ENCODE measurements at regions of chr16 and their contacts with region 1.

Region 1: GRCh38 chr16:67109407-67110135 is at the start of gene PHAF1:
- DNase-seq: peak; percentile 99
- H3K4me3 Mint-ChIP-seq: peak within 1 kb of the TSS; percentile 96
- H3K27ac Mint-ChIP-seq: peak within 1 kb of the TSS; percentile 82
- H3K4me1 Mint-ChIP-seq: peaks cover 30% of the 10 kb centered on the region
- H3K27me3 Mint-ChIP-seq: no peaks in the 10 kb centered on the region
- total RNA-seq, gene PHAF1: 19.4 and 19.8 TPM in 2 replicates

Region 2: DNA sequence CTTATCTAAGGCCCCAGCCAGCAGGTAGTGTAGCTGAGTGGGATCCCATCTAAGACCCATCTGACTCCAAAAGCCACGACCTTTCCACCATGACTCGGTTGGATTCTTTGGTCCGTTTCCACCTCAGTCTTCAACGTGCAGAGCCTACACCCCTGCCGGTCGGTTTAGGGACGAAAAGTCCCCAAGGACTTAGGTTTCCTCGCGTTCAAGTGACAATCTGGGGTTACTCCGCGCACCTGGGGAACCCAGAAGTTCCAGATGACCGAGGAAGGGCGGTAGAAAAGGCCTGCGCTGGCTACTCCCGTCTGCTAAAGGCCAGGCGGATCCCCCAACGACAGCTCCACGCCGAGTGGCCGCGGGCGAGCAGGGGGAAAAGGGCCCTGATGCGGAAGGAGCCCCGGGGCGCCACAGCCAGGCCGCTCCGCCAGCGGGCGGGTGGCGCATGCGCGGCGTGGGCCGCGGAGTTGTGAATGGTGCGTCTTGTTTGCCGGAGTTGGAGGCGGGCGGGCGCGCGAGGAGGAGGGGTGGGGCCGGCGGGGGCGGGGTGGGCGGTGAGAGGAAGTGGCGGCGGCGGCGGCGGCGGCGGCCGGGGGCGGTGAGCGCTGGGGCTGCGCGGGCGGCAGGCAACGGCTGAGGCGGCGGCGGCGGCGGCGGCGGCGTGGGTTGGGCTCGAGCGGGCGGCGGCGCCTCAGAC is 80.9 kb before region 1 on chr16 and contains the start of gene CBFB:
- intact Hi-C with region 1: loop called (anchors 5 kb)
- DNase-seq: peak; percentile 98
- H3K4me3 Mint-ChIP-seq: peak within 1 kb of the TSS; percentile 96
- H3K27ac Mint-ChIP-seq: peak within 1 kb of the TSS; percentile 95
- H3K4me1 Mint-ChIP-seq: peaks cover 53% of the 10 kb centered on the region
- H3K27me3 Mint-ChIP-seq: no peaks in the 10 kb centered on the region
- total RNA-seq, gene CBFB: 163 and 172 TPM in 2 replicates

Region 3: DNA sequence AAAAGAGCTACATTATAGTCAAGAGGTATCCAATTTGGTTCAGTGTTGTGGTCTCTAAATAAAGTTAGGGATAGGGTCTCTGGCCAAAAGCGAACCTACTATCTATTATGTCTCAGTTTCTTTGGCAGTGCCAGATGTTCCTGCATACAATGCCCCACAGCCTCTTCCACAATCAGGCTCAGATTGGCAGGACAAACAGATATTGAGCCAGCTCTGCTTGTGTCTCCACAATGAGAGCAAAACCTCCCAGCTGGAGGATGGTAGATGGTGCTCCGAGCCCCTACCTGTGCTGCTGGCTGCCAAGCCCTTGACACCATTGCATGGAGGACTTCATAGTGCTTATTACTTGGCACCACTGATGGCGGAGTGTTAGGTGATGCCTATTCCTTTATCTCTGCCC is 19.9 kb after region 1 on chr16:
- intact Hi-C with region 1: no loop called
- DNase-seq: no peak
- H3K4me3 Mint-ChIP-seq: no peak overlapping the region
- H3K27ac Mint-ChIP-seq: no peak overlapping the region
- H3K4me1 Mint-ChIP-seq: peaks cover 4% of the 10 kb centered on the region
- H3K27me3 Mint-ChIP-seq: no peaks in the 10 kb centered on the region

Region 4: DNA sequence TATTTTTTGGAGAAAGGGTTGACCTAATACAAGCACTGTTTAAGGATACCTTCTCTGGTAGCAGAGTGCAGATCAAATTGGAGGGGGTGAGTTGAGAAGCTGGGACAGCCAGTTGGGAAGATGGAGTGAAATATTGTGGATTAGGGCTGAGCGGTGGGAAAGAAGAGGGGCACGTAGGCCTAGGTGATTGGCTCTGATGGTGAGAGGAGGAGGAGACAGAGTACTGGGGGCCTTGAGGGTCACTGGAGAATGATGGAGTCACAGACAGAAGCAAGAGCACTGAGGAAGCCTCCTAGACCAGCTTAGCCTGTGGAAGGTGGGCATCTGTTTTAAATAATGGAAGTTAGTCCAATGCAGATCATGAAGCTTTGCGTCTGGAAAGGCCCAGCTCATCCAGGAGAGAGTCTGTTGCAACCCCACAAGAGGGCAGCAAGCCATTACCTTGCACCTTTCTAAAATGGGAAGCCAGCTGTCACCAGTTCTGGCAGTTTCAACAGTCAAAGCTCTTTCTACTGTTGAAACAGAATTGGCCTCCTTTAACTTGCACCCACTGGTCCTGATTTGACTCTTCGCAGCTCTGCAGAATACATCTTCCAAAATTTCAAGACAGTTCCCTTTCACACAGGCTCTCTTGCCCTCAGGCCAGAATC is 151.0 kb after region 1 on chr16:
- intact Hi-C with region 1: no loop called
- DNase-seq: peak; percentile 79
- H3K4me3 Mint-ChIP-seq: no peak overlapping the region
- H3K27ac Mint-ChIP-seq: no peak overlapping the region
- H3K4me1 Mint-ChIP-seq: peaks cover 3% of the 10 kb centered on the region
- H3K27me3 Mint-ChIP-seq: no peaks in the 10 kb centered on the region